Ascending aorta (tissue), 2 donors: ENCODE measurements at regions of chr15 and their contacts with region 1.

Region 1: DNA sequence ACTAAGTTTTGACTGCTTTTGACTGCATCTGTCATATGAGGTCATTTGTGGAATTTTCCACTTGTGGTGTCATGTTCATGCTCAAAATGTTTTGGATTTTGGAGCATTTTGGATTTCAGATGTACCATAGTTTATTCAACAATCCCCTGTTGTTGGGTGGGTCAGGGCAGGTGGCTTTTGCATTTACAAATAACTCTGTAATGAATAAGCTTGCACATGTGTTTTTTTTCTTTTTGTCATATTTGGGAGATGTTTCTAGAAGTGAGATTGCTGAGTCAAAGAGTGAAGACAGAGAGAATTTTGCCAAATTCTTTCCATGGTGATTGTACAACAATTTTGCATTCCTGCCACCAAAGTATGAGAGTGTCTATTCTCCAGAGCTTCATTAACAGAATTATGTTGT is 62.4 kb upstream of the ADPGK start:
- DNase-seq: no peak
- H3K4me3 ChIP-seq: no peak overlapping the region
- H3K27ac ChIP-seq: no peak overlapping the region
- H3K4me1 ChIP-seq: peaks cover 0 to 3% of the 10 kb centered on the region in 2 donors
- H3K27me3 ChIP-seq: no peaks in the 10 kb centered on the region
- CTCF ChIP-seq: no peak

Region 2: DNA sequence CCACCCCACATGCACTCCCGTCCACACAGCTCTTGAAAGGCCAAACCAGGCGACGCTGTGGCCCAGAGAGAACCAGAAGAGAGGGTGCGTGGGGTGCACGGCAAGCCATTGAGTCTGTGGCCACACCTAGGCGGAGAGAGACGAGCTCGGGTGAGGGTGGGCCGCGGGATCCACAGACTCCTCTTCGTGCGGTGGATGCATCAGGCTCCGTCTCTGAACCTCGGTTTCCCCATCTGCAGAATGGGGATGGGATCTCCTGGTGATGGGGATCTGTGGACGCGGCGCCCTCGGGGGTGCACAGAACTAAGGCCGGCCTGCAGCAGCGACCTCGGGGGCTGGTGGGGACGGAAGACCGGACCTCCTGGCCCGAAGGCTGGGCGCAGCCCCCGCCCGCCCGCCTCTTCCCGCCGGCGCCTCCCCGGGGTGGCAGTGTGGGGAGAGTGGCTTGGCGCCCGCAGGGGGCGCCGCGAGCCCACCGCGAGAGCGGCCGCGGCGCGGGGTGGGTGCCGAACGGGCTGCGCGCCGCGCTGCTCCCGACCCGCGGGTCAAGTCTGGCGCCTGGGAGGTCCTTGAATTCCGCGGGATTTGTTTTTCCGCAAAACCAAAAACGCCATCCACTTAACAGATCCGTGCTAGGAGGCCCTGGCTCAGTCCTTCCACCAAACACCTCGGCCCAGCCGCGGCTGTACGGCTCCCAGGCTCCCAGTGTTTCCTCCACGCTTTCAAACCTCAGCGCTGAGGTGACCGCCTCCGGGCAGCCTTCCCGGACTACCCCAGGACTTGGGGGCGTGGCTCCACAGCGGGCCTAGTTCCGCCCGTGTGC is 49.3 kb before region 1 on chr15:
- intact Hi-C with region 1: no loop called
- DNase-seq: peak in 1 of 2 donors; percentile 66
- H3K4me3 ChIP-seq: peak overlapping the region; percentile 51 to 69
- H3K27ac ChIP-seq: peak overlapping the region in 1 of 2 donors; percentile 7
- H3K4me1 ChIP-seq: peaks cover 0 to 7% of the 10 kb centered on the region in 2 donors
- H3K27me3 ChIP-seq: no peaks in the 10 kb centered on the region
- CTCF ChIP-seq: peak; percentile 39 to 76 (median 52)

Region 3: DNA sequence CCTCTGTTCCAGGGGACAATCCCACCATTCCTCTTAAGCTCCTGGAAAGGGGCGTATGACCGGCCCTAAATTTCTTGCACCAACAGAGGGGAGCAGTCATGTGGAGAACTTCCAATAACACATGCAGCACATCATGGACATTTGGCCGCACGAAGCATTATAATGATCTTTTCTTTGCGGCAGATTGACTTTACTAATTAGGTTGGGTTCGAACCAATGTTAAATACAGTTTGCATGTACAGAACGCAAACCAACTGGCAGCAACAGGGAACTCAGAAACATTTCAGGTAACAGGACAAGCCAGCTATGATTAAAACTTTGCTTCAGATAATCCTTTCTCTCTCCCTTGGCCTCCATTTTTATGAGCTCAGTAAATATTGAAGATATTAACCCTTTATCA is 38.3 kb after region 1 on chr15:
- intact Hi-C with region 1: loop called (anchors 5 kb)
- DNase-seq: no peak
- H3K4me3 ChIP-seq: no peak overlapping the region
- H3K27ac ChIP-seq: no peak overlapping the region
- H3K4me1 ChIP-seq: no peaks in the 10 kb centered on the region
- H3K27me3 ChIP-seq: no peaks in the 10 kb centered on the region
- CTCF ChIP-seq: no peak